ENCODE measurements at regions of chr6 and their contacts with region 1.

Region 1: DNA sequence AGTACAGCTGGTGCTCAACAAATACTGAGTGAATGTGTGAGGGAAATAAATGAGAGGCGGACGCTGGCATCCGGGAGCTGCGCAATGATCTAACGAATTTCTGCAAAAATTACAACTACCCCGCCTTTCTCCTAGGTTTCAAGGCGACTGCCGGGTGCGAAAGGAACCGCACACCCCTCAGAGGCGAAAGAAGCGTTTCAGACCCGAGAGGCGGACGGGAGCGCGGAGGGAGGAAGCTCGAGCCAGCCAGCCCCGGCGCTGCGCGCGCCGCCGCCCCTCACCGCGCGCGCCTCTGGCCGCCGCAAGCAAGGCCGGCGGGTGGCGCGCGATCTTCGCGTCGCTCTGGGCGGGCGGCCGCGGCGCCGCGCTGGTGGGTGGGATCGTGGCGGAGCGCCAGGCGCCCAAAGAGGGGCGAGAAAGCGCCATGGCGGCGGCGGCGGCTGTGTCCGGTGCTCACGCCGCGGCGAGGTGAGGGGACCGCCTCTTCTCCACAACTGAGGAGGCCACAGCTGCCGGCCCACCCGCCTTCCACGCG is at the start of gene BLTP3A:
- DNase-seq: peak; percentile 78
- ATAC-seq: peak; percentile 93
- H3K4me3 Mint-ChIP-seq: peak within 1 kb of the TSS; percentile 96
- H3K27ac Mint-ChIP-seq: peak within 1 kb of the TSS; percentile 93
- H3K4me1 Mint-ChIP-seq: peaks cover 24% of the 10 kb centered on the region
- H3K27me3 Mint-ChIP-seq: no peaks in the 10 kb centered on the region
- CTCF ChIP-seq: no peak
- total RNA-seq, gene BLTP3A: 10.8 and 12.6 TPM in 2 replicates

Region 2: DNA sequence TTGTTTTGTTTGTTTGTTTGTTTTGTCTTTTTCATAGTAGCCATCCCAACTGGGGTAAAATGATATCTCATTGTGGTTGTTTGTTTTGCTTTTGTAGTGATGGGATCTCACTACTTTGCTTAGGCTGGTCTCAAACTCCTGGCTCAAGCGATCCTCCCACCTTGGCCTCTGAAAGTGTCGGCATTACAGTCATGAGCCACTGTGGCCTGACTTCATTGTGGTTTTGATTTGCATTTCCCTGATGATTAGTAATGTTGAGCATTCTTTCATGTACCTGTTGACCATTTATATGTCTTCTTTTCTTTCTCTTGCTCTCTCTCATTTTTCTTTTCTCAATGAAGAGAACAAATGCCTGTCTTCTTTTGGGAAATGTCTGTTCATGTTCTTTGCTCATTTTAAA is 1751.6 kb before region 1 on chr6:
- CTCF ChIA-PET with region 1: no interaction called
- POLR2A ChIA-PET with region 1: no interaction called
- intact Hi-C with region 1: no loop called
- DNase-seq: no peak
- ATAC-seq: no peak
- H3K4me3 Mint-ChIP-seq: no peak overlapping the region
- H3K27ac Mint-ChIP-seq: peak overlapping the region; percentile 53
- H3K4me1 Mint-ChIP-seq: peaks cover 10% of the 10 kb centered on the region
- H3K27me3 Mint-ChIP-seq: no peaks in the 10 kb centered on the region
- CTCF ChIP-seq: no peak

Region 3: GRCh38 chr6:34526992-34527728 is 264.6 kb before region 1 on chr6:
- CTCF ChIA-PET with region 1: no interaction called
- POLR2A ChIA-PET with region 1: no interaction called
- intact Hi-C with region 1: loop called (anchors 2 kb)
- DNase-seq: peak; percentile 92
- ATAC-seq: peak; percentile 98
- H3K4me3 Mint-ChIP-seq: peak overlapping the region; percentile 69
- H3K27ac Mint-ChIP-seq: peak overlapping the region; percentile 66
- H3K4me1 Mint-ChIP-seq: peaks cover 7% of the 10 kb centered on the region
- H3K27me3 Mint-ChIP-seq: no peaks in the 10 kb centered on the region
- CTCF ChIP-seq: no peak

Region 4: DNA sequence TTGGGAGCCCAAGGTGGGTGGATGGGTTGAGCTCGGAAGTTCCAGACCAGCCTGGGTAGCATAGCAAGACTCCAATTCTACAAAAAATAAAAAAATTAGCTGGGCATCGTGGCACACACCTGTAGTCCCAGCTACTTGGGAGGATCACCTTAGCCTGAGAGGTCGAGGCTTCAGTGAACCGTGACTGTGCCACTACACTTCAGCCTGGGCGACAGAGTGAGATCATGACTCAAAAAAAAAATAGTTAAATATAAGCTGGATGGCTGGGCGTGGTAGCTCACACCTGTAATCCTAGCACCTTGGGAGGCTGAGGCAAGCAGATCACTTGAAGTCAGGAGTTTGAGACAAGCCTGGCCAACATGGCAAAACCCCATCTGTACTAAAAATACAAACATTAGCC is 13.3 kb after region 1 on chr6:
- CTCF ChIA-PET with region 1: interaction called, 4 read pairs
- POLR2A ChIA-PET with region 1: interaction called, 17 read pairs
- intact Hi-C with region 1: no loop called
- DNase-seq: no peak
- ATAC-seq: no peak
- H3K4me3 Mint-ChIP-seq: no peak overlapping the region
- H3K27ac Mint-ChIP-seq: no peak overlapping the region
- H3K4me1 Mint-ChIP-seq: peaks cover 7% of the 10 kb centered on the region
- H3K27me3 Mint-ChIP-seq: no peaks in the 10 kb centered on the region
- CTCF ChIP-seq: no peak

Measured in activated B cell treated with CpG ODN at 0.5 μM for 24 hours (primary cell).